Sigmoid colon (tissue), 7 donors: ENCODE measurements at regions of chr6 and their contacts with region 1.

Region 1: GRCh38 chr6:5995949-5996713 is 10.6 kb downstream of the NRN1 start:
- DNase-seq: peak; percentile 73
- H3K4me3 ChIP-seq: peak overlapping the region; percentile 27 to 54 (median 48)
- H3K27ac ChIP-seq: peak overlapping the region; percentile 41 to 67 (median 56)
- H3K4me1 ChIP-seq: peaks cover 0 to 42% (median 37%) of the 10 kb centered on the region in 4 donors
- H3K27me3 ChIP-seq: peaks cover 59 to 87% (median 83%) of the 10 kb centered on the region in 3 donors
- CTCF ChIP-seq: no peak
- EP300 ChIP-seq: no peak
- POLR2A ChIP-seq: no peak

Region 2: GRCh38 chr6:5905431-5906339 is 90.4 kb before region 1 on chr6:
- intact Hi-C with region 1: loop called (anchors 5 kb)
- DNase-seq: peak; percentile 94
- H3K4me3 ChIP-seq: no peak overlapping the region
- H3K27ac ChIP-seq: peak overlapping the region; percentile 41 to 68 (median 54)
- H3K4me1 ChIP-seq: peaks cover 0 to 19% (median 17%) of the 10 kb centered on the region in 4 donors
- H3K27me3 ChIP-seq: no peaks in the 10 kb centered on the region
- CTCF ChIP-seq: no peak
- EP300 ChIP-seq: no peak
- POLR2A ChIP-seq: no peak